Heart right ventricle (tissue), 16 donors: ENCODE measurements at regions of chr20 and their contacts with region 1.

Region 1: GRCh38 chr20:37108676-37109075 is 12.9 kb upstream of the RBL1 start:
- DNase-seq: no peak
- ATAC-seq: no peak
- H3K4me3 ChIP-seq: no peak overlapping the region
- H3K27ac ChIP-seq: no peak overlapping the region
- H3K4me1 ChIP-seq: no peaks in the 10 kb centered on the region
- H3K27me3 ChIP-seq: no peaks in the 10 kb centered on the region
- CTCF ChIP-seq: no peak

Region 2: DNA sequence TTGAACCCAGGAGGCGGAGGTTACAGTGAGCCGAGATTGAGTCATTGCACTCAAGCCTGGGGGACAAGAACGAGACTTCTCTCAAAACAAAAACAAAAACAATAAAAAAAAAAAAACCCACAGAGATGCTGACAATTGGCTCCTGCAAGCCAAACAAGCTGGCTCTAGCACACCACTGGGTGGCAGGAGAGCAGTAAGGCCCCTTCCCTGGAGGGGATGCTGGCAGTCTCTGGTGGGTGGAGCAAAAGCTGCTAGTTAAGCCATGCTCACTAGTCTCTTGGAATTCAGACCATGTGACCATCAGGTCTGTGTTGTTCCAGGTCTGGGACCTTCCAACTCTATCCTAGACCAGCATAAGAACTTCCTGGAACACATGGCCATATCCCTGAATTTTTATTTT is 316.3 kb before region 1 on chr20:
- intact Hi-C with region 1: no loop called
- DNase-seq: peak in 1 of 2 donors; percentile 45
- ATAC-seq: peak in 7 of 8 donors; percentile 30 to 83 (median 57)
- H3K4me3 ChIP-seq: no peak overlapping the region
- H3K27ac ChIP-seq: no peak overlapping the region
- H3K4me1 ChIP-seq: peaks cover 0 to 18% (median 5%) of the 10 kb centered on the region in 9 donors
- H3K27me3 ChIP-seq: no peaks in the 10 kb centered on the region
- CTCF ChIP-seq: peak in 8 of 9 donors; percentile 26 to 62 (median 46)

Region 3: DNA sequence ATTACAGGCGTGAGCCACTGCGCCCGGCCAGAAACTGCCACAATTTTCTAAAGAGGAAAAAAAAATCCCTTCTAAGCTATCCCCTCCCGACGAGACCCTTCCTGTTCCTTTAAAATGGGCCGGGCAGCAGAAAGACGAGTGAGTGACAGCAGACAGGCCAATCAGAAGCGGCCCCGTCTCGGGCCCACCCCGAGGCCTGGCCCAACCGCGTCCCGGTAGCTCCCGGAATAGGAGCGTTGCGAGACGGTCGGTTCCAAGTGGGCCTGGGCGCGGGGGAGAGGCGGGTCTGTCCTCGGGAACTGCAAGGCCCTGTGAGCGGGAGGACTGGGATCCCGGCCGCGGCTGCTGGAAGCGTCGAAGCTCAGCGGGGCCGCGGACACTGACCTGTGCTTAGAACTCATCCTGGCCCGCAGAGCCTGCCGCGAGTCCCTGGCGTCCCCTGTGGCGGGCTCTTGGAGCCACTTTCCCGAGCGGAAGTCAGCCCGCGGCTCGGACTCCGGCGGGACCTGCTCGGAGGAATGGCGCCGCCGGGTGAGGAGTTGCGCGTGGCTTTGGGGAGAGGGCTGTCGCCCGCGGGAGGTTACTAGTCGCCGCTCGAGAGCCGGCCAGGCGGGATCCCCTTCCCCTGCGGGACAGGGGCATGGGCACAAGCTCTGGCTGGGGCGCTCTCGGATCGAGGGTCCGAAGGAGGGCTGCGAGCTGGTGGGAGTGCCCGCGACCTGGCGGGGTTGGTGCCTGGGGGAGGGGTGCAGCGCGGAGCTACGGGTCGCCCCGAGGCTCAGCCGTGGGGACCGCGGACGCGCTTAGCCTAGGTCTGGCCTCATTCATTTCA is 70.4 kb after region 1 on chr20 and contains the starts of genes MROH8 and RPN2:
- intact Hi-C with region 1: loop called in 1 of 10 experiments (anchors 10 kb)
- DNase-seq: peak; percentile 98 to 99
- ATAC-seq: peak; percentile 98 to 100 (median 99)
- H3K4me3 ChIP-seq: peak within 1 kb of the TSS; percentile 65 to 96 (median 82)
- H3K27ac ChIP-seq: peak within 1 kb of the TSS; percentile 94 to 99 (median 98)
- H3K4me1 ChIP-seq: peaks cover 9 to 49% (median 39%) of the 10 kb centered on the region in 9 donors
- H3K27me3 ChIP-seq: no peaks in the 10 kb centered on the region
- CTCF ChIP-seq: no peak
- total RNA-seq, gene MROH8: 5.1 to 10.0 (median 6.5) TPM
- total RNA-seq, gene RPN2: 75.4 to 163 (median 95.2) TPM